IMR-90 (cell line): ENCODE measurements at regions of chr1 and their contacts with region 1.

Region 1: GRCh38 chr1:161749509-161750407 is at the start of gene DUSP12:
- DNase-seq: peak; percentile 96
- ATAC-seq: peak; percentile 98
- H3K4me3 ChIP-seq: peak within 1 kb of the TSS; percentile 91
- H3K27ac ChIP-seq: peak within 1 kb of the TSS; percentile 97
- H3K4me1 ChIP-seq: no peaks in the 10 kb centered on the region
- H3K27me3 ChIP-seq: no peaks in the 10 kb centered on the region
- CTCF ChIP-seq: 0 out of 2 replicates have a peak, but pooled peaks have one; percentile 32
- POLR2A ChIP-seq: peak; percentile 79
- RAD21 ChIP-seq: no peak
- total RNA-seq, gene DUSP12: 31.5 and 31.7 TPM in 2 replicates

Region 2: DNA sequence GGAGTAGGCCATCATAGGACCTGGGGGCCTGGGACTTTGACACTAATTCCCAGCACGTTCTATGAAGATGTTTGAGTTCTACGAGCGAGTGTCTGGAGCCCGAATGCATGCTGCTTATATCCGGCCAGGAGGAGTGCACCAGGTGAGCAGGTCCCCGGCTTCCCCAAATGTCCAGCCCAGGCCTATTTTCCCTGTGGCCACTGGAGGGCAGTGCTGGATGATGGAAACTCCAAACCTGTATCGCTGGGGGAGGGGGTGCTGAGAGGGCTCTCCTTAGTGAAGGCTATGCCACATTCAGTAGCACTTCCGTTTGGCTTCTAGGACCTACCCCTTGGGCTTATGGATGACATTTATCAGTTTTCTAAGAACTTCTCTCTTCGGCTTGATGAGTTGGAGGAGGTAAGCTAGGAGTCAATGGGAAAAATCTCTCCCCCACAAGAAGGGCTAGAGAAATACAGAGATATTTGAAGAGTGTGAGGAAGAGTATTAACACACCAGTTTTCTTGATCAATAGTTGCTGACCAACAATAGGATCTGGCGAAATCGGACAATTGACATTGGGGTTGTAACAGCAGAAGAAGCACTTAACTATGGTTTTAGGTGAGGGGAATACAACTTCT is 539.9 kb before region 1 on chr1:
- CTCF ChIA-PET with region 1: no interaction called
- POLR2A ChIA-PET with region 1: no interaction called
- dilution Hi-C with region 1: no loop called
- in situ Hi-C with region 1: loop called (anchors 10 kb)
- intact Hi-C with region 1: no loop called
- DNase-seq: peak; percentile 67
- ATAC-seq: peak; percentile 87
- H3K4me3 ChIP-seq: no peak overlapping the region
- H3K27ac ChIP-seq: no peak overlapping the region
- H3K4me1 ChIP-seq: peaks cover 11% of the 10 kb centered on the region
- H3K27me3 ChIP-seq: no peaks in the 10 kb centered on the region
- CTCF ChIP-seq: peak; percentile 91
- POLR2A ChIP-seq: 0 out of 2 replicates have a peak, but pooled peaks have one; percentile 46
- RAD21 ChIP-seq: peak; percentile 88

Region 3: DNA sequence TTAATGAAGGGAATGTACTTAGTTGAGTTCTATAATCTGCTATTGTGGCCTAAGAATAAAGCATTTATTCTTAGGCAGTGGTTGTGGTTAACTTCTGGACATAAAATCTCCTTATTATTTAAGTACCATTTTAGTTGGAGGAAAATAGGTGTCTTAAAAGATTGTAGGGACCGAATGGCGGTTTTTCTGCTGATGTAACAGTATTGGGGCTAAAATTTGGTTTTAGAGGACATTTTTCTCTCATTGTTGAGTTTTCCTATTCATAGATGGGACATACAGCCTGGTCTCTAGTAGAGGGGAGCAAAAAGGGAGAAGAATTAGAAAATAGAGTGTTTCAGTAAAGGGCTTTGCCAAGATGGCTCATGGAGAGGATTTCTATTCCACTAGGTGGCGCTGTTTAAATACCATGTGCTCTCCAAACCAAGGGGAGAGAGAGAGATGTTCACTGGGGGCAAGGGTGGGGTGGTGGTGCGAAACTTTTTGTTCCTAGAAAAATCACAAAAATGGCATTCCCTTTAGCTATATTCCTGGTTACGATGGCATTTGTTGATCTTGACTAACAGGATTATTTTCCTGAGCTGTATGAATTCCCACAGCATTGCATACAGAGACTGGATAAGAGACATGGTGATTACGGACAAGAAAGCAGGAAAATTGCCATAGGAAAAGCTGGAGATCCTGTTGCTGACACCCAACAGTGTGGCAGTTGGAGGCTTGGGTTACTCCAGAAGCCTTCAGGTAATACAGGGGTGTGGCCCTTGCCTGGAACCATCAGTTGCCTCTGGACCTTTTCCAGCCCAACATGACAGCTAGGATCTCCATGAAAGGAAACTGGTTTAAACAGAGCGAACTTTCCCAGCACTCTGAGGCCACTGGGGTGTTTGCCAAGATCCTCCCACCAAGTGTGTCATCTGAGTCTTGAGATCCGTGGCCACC is 262.7 kb before region 1 on chr1:
- CTCF ChIA-PET with region 1: no interaction called
- POLR2A ChIA-PET with region 1: no interaction called
- dilution Hi-C with region 1: no loop called
- in situ Hi-C with region 1: loop called (anchors 10 kb)
- intact Hi-C with region 1: no loop called
- DNase-seq: peak; percentile 74
- ATAC-seq: peak; percentile 70
- H3K4me3 ChIP-seq: peak overlapping the region; percentile 37; the same call in 1 of the 2 replicates
- H3K27ac ChIP-seq: no peak overlapping the region
- H3K4me1 ChIP-seq: peaks cover 2% of the 10 kb centered on the region; the same call in 1 of the 2 replicates
- H3K27me3 ChIP-seq: peaks cover 22% of the 10 kb centered on the region
- CTCF ChIP-seq: peak; percentile 77
- POLR2A ChIP-seq: no peak
- RAD21 ChIP-seq: peak; percentile 68

Region 4: GRCh38 chr1:161499099-161500039 is 250.4 kb before region 1 on chr1:
- CTCF ChIA-PET with region 1: no interaction called
- POLR2A ChIA-PET with region 1: no interaction called
- dilution Hi-C with region 1: no loop called
- in situ Hi-C with region 1: no loop called
- intact Hi-C with region 1: no loop called
- DNase-seq: no peak
- ATAC-seq: no peak
- H3K4me3 ChIP-seq: no peak overlapping the region
- H3K27ac ChIP-seq: no peak overlapping the region
- H3K4me1 ChIP-seq: no peaks in the 10 kb centered on the region
- H3K27me3 ChIP-seq: peaks cover 14% of the 10 kb centered on the region
- CTCF ChIP-seq: no peak
- POLR2A ChIP-seq: no peak
- RAD21 ChIP-seq: no peak

Region 5: DNA sequence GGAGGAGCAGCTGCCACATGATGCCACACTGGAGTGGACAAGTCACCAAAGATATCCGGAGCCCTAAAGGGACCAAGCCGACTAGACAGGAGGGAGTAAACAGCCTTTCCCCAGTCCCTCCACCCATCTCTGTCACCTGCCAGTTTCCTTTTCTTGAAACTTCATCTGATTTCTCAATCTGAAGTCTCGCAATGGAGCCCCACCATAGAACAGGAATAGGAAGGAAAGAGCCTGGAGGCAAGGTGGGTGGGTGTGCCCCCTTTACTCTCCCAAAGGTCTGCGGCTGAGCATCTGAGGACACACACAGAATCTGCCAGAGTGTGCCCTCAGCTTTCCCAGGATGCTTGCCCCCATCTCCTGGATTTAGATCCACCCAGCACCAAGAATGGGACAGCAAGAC is 118.7 kb before region 1 on chr1 and contains the start of gene FCGR3B:
- CTCF ChIA-PET with region 1: no interaction called
- POLR2A ChIA-PET with region 1: no interaction called
- dilution Hi-C with region 1: no loop called
- in situ Hi-C with region 1: loop called (anchors 25 kb)
- intact Hi-C with region 1: no loop called
- DNase-seq: no peak
- ATAC-seq: no peak
- H3K4me3 ChIP-seq: no peak within 1 kb of the TSS
- H3K27ac ChIP-seq: no peak within 1 kb of the TSS
- H3K4me1 ChIP-seq: no peaks in the 10 kb centered on the region
- H3K27me3 ChIP-seq: no peaks in the 10 kb centered on the region
- CTCF ChIP-seq: no peak
- POLR2A ChIP-seq: no peak
- RAD21 ChIP-seq: no peak
- total RNA-seq, gene FCGR3B: not detected in 2 replicates

Region 6: GRCh38 chr1:161726596-161727457 is 22.9 kb before region 1 on chr1:
- CTCF ChIA-PET with region 1: no interaction called
- POLR2A ChIA-PET with region 1: no interaction called
- dilution Hi-C with region 1: no loop called
- in situ Hi-C with region 1: no loop called
- intact Hi-C with region 1: no loop called
- DNase-seq: peak; percentile 79
- ATAC-seq: peak; percentile 85
- H3K4me3 ChIP-seq: peak overlapping the region; percentile 98
- H3K27ac ChIP-seq: peak overlapping the region; percentile 91
- H3K4me1 ChIP-seq: peaks cover 3% of the 10 kb centered on the region; the same call in 1 of the 2 replicates
- H3K27me3 ChIP-seq: no peaks in the 10 kb centered on the region
- CTCF ChIP-seq: no peak
- POLR2A ChIP-seq: peak; percentile 64
- RAD21 ChIP-seq: no peak